ENCODE measurements at regions of chr1 and their contacts with region 1.

Region 1: GRCh38 chr1:26787706-26788514 is at the start of gene PIGV:
- DNase-seq: peak in 1 of 2 experiments; percentile 95
- H3K4me3 ChIP-seq: peak within 1 kb of the TSS; percentile 63 to 84 (median 73)
- H3K27ac ChIP-seq: peak within 1 kb of the TSS; percentile 81
- H3K4me1 ChIP-seq: peaks cover 7 to 18% (median 12%) of the 10 kb centered on the region in 4 experiments; a peak in 6 of 7 replicates
- H3K27me3 ChIP-seq: no peaks in the 10 kb centered on the region
- CTCF ChIP-seq: no peak
- EP300 ChIP-seq: no peak
- POLR2A ChIP-seq: peak; percentile 70 to 87
- RAD21 ChIP-seq: no peak
- total RNA-seq, gene PIGV: 8.5 and 9.3 TPM in 2 replicates

Region 2: GRCh38 chr1:26695356-26696118 is 92.4 kb before region 1 on chr1 and contains the start of gene ARID1A:
- CTCF ChIA-PET with region 1: interaction called, 6 read pairs
- POLR2A ChIA-PET with region 1: interaction called, 118 read pairs
- DNase-seq: peak; percentile 73 to 97
- H3K4me3 ChIP-seq: peak within 1 kb of the TSS; percentile 88 to 95 (median 92)
- H3K27ac ChIP-seq: peak within 1 kb of the TSS; percentile 93
- H3K4me1 ChIP-seq: peaks cover 14 to 19% (median 16%) of the 10 kb centered on the region in 4 experiments; a peak in 6 of 7 replicates
- H3K27me3 ChIP-seq: no peaks in the 10 kb centered on the region
- CTCF ChIP-seq: no peak
- EP300 ChIP-seq: peak in 1 of 2 experiments; percentile 70; a peak in 1 of 3 replicates
- POLR2A ChIP-seq: peak; percentile 72 to 75
- RAD21 ChIP-seq: peak; percentile 6 to 13; a peak in 2 of 4 replicates
- total RNA-seq, gene ARID1A: 103 and 105 TPM in 2 replicates

Region 3: GRCh38 chr1:26761217-26761616 is 26.7 kb before region 1 on chr1:
- CTCF ChIA-PET with region 1: interaction called, 19 read pairs
- POLR2A ChIA-PET with region 1: no interaction called
- DNase-seq: no peak
- H3K4me3 ChIP-seq: no peak overlapping the region
- H3K27ac ChIP-seq: no peak overlapping the region
- H3K4me1 ChIP-seq: no peaks in the 10 kb centered on the region
- H3K27me3 ChIP-seq: no peaks in the 10 kb centered on the region
- CTCF ChIP-seq: peak in 2 of 3 experiments; percentile 4 to 26; a peak in 2 of 4 replicates
- EP300 ChIP-seq: no peak
- POLR2A ChIP-seq: no peak
- RAD21 ChIP-seq: no peak; a peak in 1 of 4 replicates

Region 4: DNA sequence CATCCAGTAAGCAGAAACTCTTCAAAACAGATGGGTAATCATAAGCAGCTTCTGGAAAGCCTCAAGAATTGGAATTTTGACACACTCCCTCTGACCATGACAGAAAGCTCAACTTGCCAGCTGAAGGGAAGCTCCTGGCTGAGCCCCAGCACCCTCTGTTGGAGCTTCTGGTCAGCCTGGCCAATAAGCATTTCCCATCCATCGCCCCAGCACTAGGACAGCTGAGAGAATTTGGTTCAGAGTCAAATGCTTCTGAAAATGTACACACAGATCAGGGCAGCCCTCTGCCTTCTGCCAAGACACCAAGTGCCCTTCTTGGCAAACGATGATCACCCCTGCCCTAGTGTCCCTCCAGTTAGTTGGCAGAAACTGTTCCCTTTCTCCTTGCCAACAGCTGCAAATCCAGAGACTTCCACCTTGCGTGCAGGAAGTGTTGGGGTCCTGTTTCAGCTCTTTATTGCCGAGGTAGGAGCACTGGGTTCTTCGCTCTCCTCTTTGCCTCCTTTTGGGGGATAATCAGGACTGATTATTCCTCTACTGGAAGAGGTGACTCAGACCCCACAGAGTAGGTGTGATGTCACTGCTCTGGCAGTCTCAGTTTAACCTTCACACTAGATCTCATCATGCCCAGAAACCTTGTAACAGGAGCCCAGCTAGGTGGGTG is 11.7 kb after region 1 on chr1:
- CTCF ChIA-PET with region 1: interaction called, 61 read pairs
- POLR2A ChIA-PET with region 1: interaction called, 7 read pairs
- DNase-seq: no peak
- H3K4me3 ChIP-seq: no peak overlapping the region
- H3K27ac ChIP-seq: no peak overlapping the region
- H3K4me1 ChIP-seq: peaks cover 3 to 12% (median 5%) of the 10 kb centered on the region in 4 experiments; a peak in 4 of 7 replicates
- H3K27me3 ChIP-seq: no peaks in the 10 kb centered on the region
- CTCF ChIP-seq: no peak
- EP300 ChIP-seq: no peak
- POLR2A ChIP-seq: no peak
- RAD21 ChIP-seq: no peak

Region 5: DNA sequence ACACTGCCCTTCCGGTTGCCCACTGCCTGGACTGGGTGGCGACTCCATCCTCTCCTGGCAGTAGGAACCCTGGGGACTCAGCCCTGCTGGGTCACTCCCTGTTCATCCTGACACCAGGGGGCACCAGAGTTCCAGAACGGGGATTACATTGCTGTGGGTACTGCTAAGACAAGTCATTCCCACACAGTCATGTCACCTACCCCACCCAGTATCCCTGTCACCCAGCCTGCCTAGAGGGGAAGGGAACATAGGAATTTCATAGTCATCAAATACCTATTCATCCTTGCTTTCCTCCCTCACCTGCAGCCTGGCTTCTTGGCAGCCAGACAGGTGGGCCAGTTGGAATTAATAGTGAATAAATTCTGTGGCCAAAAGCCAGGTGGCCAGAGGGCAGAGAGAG is 65.2 kb after region 1 on chr1:
- CTCF ChIA-PET with region 1: interaction called, 10 read pairs
- POLR2A ChIA-PET with region 1: no interaction called
- DNase-seq: peak in 1 of 2 experiments; percentile 94
- H3K4me3 ChIP-seq: no peak overlapping the region
- H3K27ac ChIP-seq: no peak overlapping the region
- H3K4me1 ChIP-seq: peaks cover 0 to 10% (median 6%) of the 10 kb centered on the region in 4 experiments; a peak in 6 of 7 replicates
- H3K27me3 ChIP-seq: no peaks in the 10 kb centered on the region
- CTCF ChIP-seq: peak; percentile 85 to 87 (median 85)
- EP300 ChIP-seq: no peak
- POLR2A ChIP-seq: no peak
- RAD21 ChIP-seq: peak; percentile 74 to 83

Region 6: GRCh38 chr1:26970810-26971209 is 182.9 kb after region 1 on chr1:
- CTCF ChIA-PET with region 1: no interaction called
- POLR2A ChIA-PET with region 1: no interaction called
- DNase-seq: no peak
- H3K4me3 ChIP-seq: no peak overlapping the region
- H3K27ac ChIP-seq: no peak overlapping the region
- H3K4me1 ChIP-seq: peaks cover 0 to 6% (median 3%) of the 10 kb centered on the region in 4 experiments; a peak in 3 of 7 replicates
- H3K27me3 ChIP-seq: no peaks in the 10 kb centered on the region
- CTCF ChIP-seq: no peak
- EP300 ChIP-seq: no peak
- POLR2A ChIP-seq: no peak
- RAD21 ChIP-seq: no peak